ENCODE measurements at regions of chr1 and their contacts with region 1.

Region 1: DNA sequence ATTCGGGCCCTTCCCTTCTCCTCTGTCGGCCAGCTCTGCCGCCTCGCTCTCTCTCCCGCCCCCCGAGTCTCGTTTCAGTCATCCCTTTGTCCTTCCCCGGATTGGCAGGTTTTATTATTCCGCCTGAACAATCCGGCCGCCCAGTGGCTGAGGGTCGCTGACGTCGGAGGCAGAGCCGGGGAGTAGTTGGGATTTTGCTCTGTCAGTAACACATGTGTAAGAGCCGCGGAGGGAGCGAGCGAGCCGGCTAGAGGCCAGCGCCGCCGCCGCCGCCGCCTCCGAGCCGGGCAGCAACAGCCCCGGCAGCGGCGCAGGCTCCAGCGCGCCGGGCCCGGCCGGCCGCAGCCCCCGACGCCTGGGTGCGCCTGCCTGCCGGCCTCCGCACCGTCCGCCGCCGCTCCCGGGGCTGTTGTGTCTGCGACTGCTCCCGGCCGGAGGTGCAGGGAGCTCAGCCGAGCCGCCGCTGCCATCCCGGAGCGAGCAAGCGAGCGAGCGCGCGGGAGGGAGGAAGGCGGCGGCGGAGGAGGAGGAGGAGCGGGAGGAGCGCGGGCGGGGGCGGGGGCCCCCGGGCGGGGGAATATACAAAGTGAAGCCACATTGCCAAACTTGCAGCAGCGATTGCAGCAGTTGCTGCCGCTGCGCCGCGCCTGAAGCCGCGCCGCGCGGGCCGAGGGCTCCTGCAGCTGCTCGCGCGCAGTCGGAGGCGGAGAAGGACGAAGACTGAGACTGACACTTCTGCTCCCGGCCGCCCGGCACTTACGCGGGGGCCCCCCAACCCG is at the start of gene LMO4:
- DNase-seq: peak; percentile 57 to 80 (median 70)
- ATAC-seq: peak; percentile 83
- H3K4me3 ChIP-seq: peak within 1 kb of the TSS; percentile 44
- H3K4me3 Mint-ChIP-seq: peak within 1 kb of the TSS; percentile 85 to 97 (median 94)
- H3K27ac ChIP-seq: peak within 1 kb of the TSS; percentile 69
- H3K27ac Mint-ChIP-seq: peak within 1 kb of the TSS; percentile 70 to 98 (median 91)
- H3K4me1 ChIP-seq: peaks cover 19 to 21% of the 10 kb centered on the region in 2 donors
- H3K4me1 Mint-ChIP-seq: peaks cover 23 to 59% (median 42%) of the 10 kb centered on the region in 7 donors
- H3K27me3 ChIP-seq: peaks cover 0 to 6% of the 10 kb centered on the region in 2 donors
- H3K27me3 Mint-ChIP-seq: peaks cover 4 to 33% (median 16%) of the 10 kb centered on the region in 5 donors
- total RNA-seq, gene LMO4: 6.4 to 30.6 (median 9.4) TPM

Region 2: DNA sequence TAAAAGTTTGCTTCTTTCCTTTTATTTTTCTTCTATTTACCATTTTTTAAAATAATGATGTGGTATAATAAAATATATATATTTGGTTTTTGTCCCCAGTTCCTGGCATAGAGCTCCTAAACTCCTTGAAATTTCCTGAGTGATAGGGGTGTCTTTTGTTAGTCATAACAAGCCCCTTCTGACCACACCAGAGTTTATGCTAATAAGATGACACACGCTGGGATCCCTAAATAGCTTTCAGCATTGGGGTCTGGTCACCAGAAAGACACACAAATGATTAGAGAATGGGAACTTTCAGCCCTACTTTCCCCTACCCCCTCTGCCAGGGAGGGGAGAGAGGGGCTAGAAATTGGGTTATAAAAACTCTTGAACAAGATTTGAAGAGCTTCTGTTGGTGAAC is 1228.1 kb before region 1 on chr1:
- CTCF ChIA-PET with region 1: no interaction called
- POLR2A ChIA-PET with region 1: no interaction called
- intact Hi-C with region 1: no loop called
- DNase-seq: no peak
- ATAC-seq: no peak
- H3K4me3 ChIP-seq: no peak overlapping the region
- H3K4me3 Mint-ChIP-seq: no peak overlapping the region
- H3K27ac ChIP-seq: no peak overlapping the region
- H3K27ac Mint-ChIP-seq: no peak overlapping the region
- H3K4me1 ChIP-seq: no peaks in the 10 kb centered on the region
- H3K4me1 Mint-ChIP-seq: no peaks in the 10 kb centered on the region
- H3K27me3 ChIP-seq: no peaks in the 10 kb centered on the region
- H3K27me3 Mint-ChIP-seq: peaks cover 0 to 7% (median 0%) of the 10 kb centered on the region in 5 donors

Region 3: GRCh38 chr1:86395771-86396497 is 932.5 kb before region 1 on chr1 and contains the start of gene ODF2L:
- CTCF ChIA-PET with region 1: no interaction called
- POLR2A ChIA-PET with region 1: interaction called, 4 read pairs
- intact Hi-C with region 1: loop called (anchors 2 kb)
- DNase-seq: peak; percentile 73 to 92 (median 90)
- ATAC-seq: peak; percentile 100
- H3K4me3 ChIP-seq: peak within 1 kb of the TSS; percentile 80
- H3K4me3 Mint-ChIP-seq: peak within 1 kb of the TSS; percentile 90 to 100 (median 98)
- H3K27ac ChIP-seq: peak within 1 kb of the TSS; percentile 90
- H3K27ac Mint-ChIP-seq: peak within 1 kb of the TSS; percentile 94 to 99 (median 98)
- H3K4me1 ChIP-seq: peaks cover 17 to 20% of the 10 kb centered on the region in 2 donors
- H3K4me1 Mint-ChIP-seq: peaks cover 23 to 70% (median 58%) of the 10 kb centered on the region in 7 donors
- H3K27me3 ChIP-seq: no peaks in the 10 kb centered on the region
- H3K27me3 Mint-ChIP-seq: peaks cover 0 to 7% (median 0%) of the 10 kb centered on the region in 5 donors
- total RNA-seq, gene ODF2L: 50.3 to 75.3 (median 52.2) TPM

Region 4: DNA sequence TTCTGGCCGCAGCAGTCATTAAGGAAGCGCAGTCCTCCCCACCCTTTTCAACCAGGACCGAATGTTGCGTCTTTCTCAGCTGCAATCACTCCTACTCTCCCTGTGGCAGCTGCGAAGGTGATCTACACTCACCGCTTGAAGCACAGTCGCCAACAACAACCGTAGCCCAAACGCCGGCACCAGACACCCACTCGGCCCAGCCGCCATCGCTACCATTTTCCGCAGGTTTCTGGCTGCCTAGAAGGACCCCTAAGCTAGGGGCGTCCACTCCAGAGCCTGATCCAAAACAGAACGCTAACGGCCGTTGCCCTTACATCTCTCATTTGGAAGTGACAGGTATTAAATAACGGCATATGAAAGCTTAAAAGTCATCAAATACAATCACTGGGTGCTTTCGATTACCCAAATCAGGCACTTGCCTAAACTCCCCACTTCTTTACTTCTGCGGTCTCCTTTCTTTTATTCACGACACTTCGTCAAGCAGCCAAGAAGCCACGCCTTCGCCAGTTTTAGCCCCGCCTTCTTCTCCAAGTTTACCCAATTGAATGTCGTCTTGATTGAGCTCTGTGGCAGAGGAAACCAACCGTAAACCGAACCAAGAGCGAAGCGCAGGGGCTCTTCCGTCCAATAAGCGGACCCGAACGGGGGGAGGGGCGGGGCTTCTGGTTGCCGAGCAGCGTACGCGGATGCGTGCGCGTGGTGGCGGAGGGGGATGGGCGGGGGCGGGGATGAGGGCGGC is 414.4 kb before region 1 on chr1 and contains the start of gene SELENOF:
- CTCF ChIA-PET with region 1: interaction called, 3 read pairs
- POLR2A ChIA-PET with region 1: no interaction called
- intact Hi-C with region 1: loop called in 1 of 2 experiments (anchors 2 kb)
- DNase-seq: peak; percentile 94 to 100 (median 99)
- ATAC-seq: peak; percentile 93
- H3K4me3 ChIP-seq: peak within 1 kb of the TSS; percentile 96
- H3K4me3 Mint-ChIP-seq: no peak within 1 kb of the TSS
- H3K27ac ChIP-seq: peak within 1 kb of the TSS; percentile 89
- H3K27ac Mint-ChIP-seq: no peak within 1 kb of the TSS
- H3K4me1 ChIP-seq: peaks cover 15 to 32% of the 10 kb centered on the region in 2 donors
- H3K4me1 Mint-ChIP-seq: peaks cover 6 to 50% (median 43%) of the 10 kb centered on the region in 7 donors
- H3K27me3 ChIP-seq: no peaks in the 10 kb centered on the region
- H3K27me3 Mint-ChIP-seq: no peaks in the 10 kb centered on the region
- total RNA-seq, gene SELENOF: 109 to 196 (median 133) TPM

Region 5: DNA sequence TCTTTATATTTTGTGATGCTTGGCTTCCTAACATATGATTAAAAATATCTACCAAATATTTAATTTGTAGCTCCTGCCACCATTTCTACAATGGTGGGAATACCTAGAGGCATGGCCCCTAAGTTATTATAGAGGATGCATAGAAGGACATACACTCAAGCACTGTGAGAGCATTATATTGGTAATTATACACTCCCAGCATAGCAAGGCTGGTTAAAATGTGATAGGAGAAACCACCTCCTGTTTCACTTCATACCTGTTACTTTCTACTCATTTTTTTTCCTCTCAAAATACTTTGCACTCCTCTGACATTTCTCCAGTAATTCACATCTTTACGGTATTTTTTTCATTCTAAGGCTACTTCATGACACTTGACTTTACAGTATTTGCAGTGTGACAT is 321.1 kb before region 1 on chr1:
- CTCF ChIA-PET with region 1: no interaction called
- POLR2A ChIA-PET with region 1: no interaction called
- intact Hi-C with region 1: no loop called
- DNase-seq: no peak
- ATAC-seq: no peak
- H3K4me3 ChIP-seq: no peak overlapping the region
- H3K4me3 Mint-ChIP-seq: no peak overlapping the region
- H3K27ac ChIP-seq: no peak overlapping the region
- H3K27ac Mint-ChIP-seq: no peak overlapping the region
- H3K4me1 ChIP-seq: no peaks in the 10 kb centered on the region
- H3K4me1 Mint-ChIP-seq: peaks cover 0 to 3% (median 0%) of the 10 kb centered on the region in 7 donors
- H3K27me3 ChIP-seq: no peaks in the 10 kb centered on the region
- H3K27me3 Mint-ChIP-seq: no peaks in the 10 kb centered on the region

Region 6: DNA sequence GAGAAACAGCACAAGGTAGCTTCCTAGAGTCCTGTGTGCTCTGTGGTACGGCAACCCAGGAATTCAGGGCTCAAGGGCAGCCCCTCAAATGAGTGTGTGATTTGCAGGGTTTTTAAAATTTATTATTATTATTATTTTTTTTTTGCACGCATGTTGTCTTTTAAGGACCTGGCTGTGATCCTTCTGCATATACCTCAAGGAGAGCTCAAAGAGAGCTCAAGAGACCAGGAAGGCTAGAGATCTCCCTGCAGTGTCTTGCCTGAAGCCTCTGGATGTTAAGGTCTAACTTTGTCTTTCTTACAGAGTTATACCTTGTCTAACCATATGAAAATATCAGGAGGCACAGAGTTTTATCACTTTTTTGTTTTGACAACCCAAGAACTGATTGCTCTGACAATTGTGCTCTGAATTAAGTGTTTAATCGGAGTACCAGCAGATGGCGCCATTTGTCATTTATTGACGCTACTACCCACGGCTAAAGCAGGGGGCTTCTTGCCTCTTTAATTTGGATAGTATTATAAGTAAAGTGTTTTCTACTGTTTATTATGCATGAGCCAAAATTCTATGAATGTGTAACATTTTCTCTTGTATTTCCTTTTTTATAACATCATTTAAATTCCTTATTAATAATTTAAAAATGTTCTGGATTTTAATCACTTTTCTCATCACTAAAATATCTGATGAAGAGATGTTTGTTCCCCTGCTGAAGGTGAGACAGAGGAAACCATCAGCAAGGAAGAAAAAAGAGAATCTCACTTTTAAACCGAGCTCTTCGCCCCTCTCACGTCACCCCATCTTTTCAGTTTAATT is 35.6 kb before region 1 on chr1:
- CTCF ChIA-PET with region 1: no interaction called
- POLR2A ChIA-PET with region 1: no interaction called
- intact Hi-C with region 1: loop called in 1 of 2 experiments (anchors 2 kb)
- DNase-seq: peak in 8 of 9 donors; percentile 6 to 55 (median 40)
- ATAC-seq: peak; percentile 57
- H3K4me3 ChIP-seq: no peak overlapping the region
- H3K4me3 Mint-ChIP-seq: no peak overlapping the region
- H3K27ac ChIP-seq: no peak overlapping the region
- H3K27ac Mint-ChIP-seq: no peak overlapping the region
- H3K4me1 ChIP-seq: no peaks in the 10 kb centered on the region
- H3K4me1 Mint-ChIP-seq: no peaks in the 10 kb centered on the region
- H3K27me3 ChIP-seq: no peaks in the 10 kb centered on the region
- H3K27me3 Mint-ChIP-seq: peaks cover 5 to 15% (median 8%) of the 10 kb centered on the region in 5 donors

Region 7: DNA sequence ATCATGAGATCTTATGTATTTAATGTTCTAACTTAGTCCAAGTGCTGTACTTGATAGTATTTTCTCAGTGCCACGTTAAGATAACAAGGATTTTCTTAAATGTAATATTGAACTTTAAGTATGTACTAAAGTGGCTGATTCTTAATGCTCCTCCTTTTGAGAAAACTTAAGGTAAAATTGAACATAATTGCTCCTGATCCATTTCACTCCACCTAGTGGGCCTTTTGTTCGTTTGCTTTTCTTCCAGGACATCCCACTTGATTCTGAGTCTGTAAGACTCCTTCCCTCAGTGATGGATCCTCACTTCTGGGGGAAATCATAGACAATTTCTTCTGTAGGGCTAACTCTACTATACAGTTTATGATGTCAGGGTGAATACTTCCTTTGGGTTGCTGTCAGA is 173.3 kb after region 1 on chr1:
- CTCF ChIA-PET with region 1: no interaction called
- POLR2A ChIA-PET with region 1: no interaction called
- intact Hi-C with region 1: loop called in 1 of 2 experiments (anchors 2 kb)
- DNase-seq: no peak
- ATAC-seq: no peak
- H3K4me3 ChIP-seq: no peak overlapping the region
- H3K4me3 Mint-ChIP-seq: no peak overlapping the region
- H3K27ac ChIP-seq: no peak overlapping the region
- H3K27ac Mint-ChIP-seq: no peak overlapping the region
- H3K4me1 ChIP-seq: no peaks in the 10 kb centered on the region
- H3K4me1 Mint-ChIP-seq: peaks cover 0 to 6% (median 0%) of the 10 kb centered on the region in 7 donors
- H3K27me3 ChIP-seq: no peaks in the 10 kb centered on the region
- H3K27me3 Mint-ChIP-seq: peaks cover 0 to 9% (median 5%) of the 10 kb centered on the region in 5 donors

Region 8: DNA sequence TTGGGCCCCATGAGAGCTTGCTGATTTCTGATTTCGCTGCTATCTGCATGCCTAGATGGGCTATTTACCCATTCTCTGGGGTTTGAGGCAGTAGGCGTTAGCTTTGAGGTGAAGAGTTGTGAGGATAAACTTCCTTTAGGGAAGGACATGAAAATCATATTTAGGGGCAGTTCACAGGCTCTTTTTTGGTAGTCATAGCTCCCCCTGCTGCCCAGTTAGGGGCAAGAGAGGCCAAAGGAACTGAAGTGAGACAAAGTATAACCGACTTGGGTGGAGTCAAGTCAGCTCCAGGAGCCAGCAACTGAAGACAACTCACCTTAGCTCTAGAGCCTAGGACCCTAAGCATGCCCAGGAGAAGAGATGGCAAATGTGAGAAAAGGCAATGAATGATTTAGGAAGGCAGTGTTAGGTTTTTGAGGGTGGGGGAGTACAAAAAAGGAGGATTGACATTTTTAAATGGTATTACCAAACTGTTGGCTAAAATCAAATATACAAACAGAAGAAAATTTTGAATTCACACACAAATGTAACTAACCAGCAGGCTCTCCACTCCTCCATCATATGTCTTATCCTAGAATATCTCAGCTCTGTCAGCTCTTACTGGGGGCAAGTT is 625.4 kb after region 1 on chr1:
- CTCF ChIA-PET with region 1: interaction called, 4 read pairs
- POLR2A ChIA-PET with region 1: interaction called, 3 read pairs
- intact Hi-C with region 1: loop called (anchors 1 kb)
- DNase-seq: peak; percentile 7 to 54 (median 36)
- ATAC-seq: peak; percentile 70
- H3K4me3 ChIP-seq: no peak overlapping the region
- H3K4me3 Mint-ChIP-seq: no peak overlapping the region
- H3K27ac ChIP-seq: no peak overlapping the region
- H3K27ac Mint-ChIP-seq: no peak overlapping the region
- H3K4me1 ChIP-seq: no peaks in the 10 kb centered on the region
- H3K4me1 Mint-ChIP-seq: no peaks in the 10 kb centered on the region
- H3K27me3 ChIP-seq: no peaks in the 10 kb centered on the region
- H3K27me3 Mint-ChIP-seq: peaks cover 4 to 25% (median 8%) of the 10 kb centered on the region in 5 donors

Region 9: DNA sequence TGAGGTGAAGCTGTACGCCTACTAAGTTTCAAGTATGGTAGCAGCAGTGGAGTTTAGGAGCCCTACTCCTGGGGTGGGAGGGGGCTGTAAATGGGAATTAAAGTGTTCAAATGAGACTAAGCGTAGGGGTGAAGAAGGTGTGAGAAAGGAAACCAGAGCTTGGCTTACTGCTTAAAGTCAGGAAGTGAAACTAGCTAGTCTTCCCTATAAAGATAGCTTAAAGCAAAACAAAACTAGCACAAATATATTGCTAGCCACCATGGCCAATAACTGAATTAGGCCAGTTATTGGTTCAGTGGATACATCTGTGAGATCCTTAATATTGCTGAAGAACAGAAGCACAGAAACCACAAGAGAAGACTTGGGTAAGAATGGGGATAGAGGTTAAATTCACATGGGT is 863.5 kb after region 1 on chr1:
- CTCF ChIA-PET with region 1: no interaction called
- POLR2A ChIA-PET with region 1: no interaction called
- intact Hi-C with region 1: no loop called
- DNase-seq: no peak
- ATAC-seq: no peak
- H3K4me3 ChIP-seq: no peak overlapping the region
- H3K4me3 Mint-ChIP-seq: peak overlapping the region in 2 of 10 donors; percentile 5 to 13
- H3K27ac ChIP-seq: no peak overlapping the region
- H3K27ac Mint-ChIP-seq: no peak overlapping the region
- H3K4me1 ChIP-seq: no peaks in the 10 kb centered on the region
- H3K4me1 Mint-ChIP-seq: peaks cover 0 to 8% (median 5%) of the 10 kb centered on the region in 7 donors
- H3K27me3 ChIP-seq: no peaks in the 10 kb centered on the region
- H3K27me3 Mint-ChIP-seq: peaks cover 0 to 9% (median 7%) of the 10 kb centered on the region in 5 donors

Region 10: DNA sequence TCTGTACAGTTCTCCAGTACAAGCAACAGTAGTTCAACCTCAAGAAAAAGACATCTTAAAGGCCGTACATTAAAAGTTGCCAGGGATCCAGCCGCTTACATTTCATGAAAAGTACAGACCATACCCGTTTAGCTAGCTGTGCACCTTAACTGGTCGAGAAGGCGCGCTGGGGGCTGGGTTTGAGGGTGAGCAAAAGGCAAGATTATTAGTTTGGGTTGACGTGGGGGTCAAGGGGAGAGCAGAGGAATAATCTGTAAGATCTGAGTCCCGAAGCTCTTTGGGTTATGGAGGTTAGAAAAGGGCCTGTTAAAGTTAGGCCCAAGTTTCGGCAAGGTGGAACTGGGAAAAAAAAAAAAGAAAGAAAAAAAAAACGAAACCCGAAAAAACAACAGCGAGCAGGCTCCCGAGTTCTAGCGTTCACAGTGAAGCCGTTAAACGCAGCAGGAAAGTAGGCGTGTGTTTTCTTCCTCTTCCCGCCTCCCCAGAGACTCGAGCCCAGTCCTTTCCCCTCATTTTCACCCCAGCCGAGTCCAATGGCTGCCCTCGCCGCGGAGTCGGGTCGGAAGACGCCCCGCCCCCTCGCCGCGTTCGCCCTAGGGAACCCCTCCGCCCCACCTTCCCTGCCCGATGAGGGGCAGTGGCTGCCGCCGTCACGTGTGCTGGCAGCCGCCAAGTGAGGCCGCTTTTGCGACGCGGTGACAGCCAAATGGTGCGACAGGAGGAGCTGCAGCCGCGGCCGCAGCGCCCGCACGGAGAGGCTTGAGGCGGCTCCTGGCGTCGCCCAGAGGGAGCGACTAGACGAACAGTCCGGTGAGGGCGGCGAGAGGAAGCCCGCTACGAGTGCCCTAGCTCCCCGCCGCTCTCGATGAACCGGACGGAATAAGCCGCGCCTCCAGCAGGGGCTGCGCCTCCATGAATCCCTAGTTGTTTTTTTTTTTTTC is 1355.3 kb after region 1 on chr1 and contains the start of gene PKN2:
- CTCF ChIA-PET with region 1: no interaction called
- POLR2A ChIA-PET with region 1: interaction called, 4 read pairs
- intact Hi-C with region 1: loop called in 1 of 2 experiments (anchors 1 kb)
- DNase-seq: peak; percentile 94 to 98 (median 97)
- ATAC-seq: peak; percentile 96
- H3K4me3 ChIP-seq: peak within 1 kb of the TSS; percentile 91
- H3K4me3 Mint-ChIP-seq: peak within 1 kb of the TSS; percentile 89 to 99 (median 97)
- H3K27ac ChIP-seq: peak within 1 kb of the TSS; percentile 89
- H3K27ac Mint-ChIP-seq: peak within 1 kb of the TSS; percentile 96 to 100 (median 97)
- H3K4me1 ChIP-seq: peaks cover 18 to 19% of the 10 kb centered on the region in 2 donors
- H3K4me1 Mint-ChIP-seq: peaks cover 18 to 53% (median 36%) of the 10 kb centered on the region in 7 donors
- H3K27me3 ChIP-seq: no peaks in the 10 kb centered on the region
- H3K27me3 Mint-ChIP-seq: peaks cover 0 to 12% (median 0%) of the 10 kb centered on the region in 5 donors
- total RNA-seq, gene PKN2: 32.1 to 53.8 (median 46.9) TPM

Measured in naive thymus-derived CD4-positive, alpha-beta T cell (primary cell).